Activated naive CD8-positive, alpha-beta T cell treated with anti-CD3 and anti-CD28 coated beads, Interleukin-2, amount 10 ng/mL, durations not matched to agents 7 days and 5 days (primary cell): ENCODE measurements at regions of chr5 and their contacts with region 1.

Region 1: DNA sequence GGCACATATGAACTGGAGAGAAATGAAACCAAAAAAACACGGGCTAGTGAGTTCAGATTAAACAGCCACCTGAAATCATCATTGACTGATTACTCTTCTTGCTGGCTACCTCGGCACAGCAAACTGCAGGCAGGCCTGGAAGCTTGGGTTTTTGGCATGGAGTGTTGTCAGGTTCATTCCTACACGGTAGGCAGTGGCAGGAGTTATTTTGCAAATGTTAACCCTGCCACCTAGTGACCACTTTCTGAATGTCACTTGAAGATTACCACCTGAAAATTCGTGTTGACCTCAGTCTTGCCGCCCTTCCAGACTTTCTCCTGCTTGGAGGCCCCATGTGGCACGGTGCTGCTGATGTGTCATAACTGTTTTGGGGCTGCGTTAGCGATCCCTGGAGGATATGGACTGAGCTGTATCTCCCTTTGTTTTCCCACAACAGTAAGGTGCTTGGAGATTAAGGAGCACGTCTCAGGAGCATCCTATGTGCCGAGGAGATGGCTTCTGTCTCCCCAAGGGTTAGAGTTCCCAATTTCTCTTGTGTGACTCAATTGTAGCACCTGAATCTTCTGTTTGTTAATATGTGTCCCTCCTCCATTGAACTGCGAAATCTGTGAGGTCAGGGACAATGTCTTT is 12.7 kb upstream of the CD180 start:
- DNase-seq: peak; percentile 64
- ATAC-seq: peak; percentile 35
- H3K4me3 Mint-ChIP-seq: peak overlapping the region; percentile 16
- H3K27ac Mint-ChIP-seq: peak overlapping the region; percentile 32
- H3K4me1 Mint-ChIP-seq: peaks cover 57% of the 10 kb centered on the region
- H3K27me3 Mint-ChIP-seq: no peaks in the 10 kb centered on the region

Region 2: DNA sequence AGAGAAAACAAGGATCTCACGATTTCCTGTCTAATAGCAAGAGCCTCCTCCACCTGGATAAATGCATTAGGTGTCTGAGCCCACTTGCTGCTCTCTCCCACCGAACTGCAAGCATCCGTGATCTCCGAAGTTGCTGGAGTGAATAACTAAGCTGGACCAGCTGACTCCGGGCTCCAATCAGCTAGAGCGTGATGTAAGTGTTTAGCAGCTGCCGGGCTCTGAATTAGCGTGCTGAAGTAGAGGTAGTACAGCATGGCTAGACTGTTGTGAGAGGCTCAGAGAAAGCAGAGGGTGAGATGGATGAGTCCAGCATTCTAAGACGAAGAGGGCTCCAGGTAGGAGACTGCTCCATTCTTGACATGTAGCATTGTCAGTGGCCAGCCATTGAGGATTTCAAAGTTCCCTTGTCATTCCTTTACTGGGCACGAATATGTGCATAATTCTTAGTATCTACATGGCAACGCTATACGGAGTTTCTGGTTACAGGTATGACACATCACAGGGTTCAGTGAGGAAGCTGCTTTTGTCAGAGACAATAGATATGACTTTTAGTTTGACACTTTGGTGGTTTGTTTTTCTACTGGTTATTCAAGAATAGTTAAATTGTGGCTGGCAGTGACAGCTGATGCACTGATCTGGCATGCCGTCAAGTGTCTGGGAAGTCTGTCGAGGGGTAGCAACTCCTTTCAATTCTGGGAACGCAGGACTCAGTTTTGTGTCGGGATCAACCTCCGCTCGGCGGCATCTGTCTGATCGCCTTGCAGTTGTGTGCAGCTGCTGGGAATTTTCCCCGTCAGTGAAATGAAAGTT is 380.5 kb before region 1 on chr5:
- POLR2A ChIA-PET with region 1: interaction called, 12 read pairs
- DNase-seq: peak; percentile 61
- ATAC-seq: peak; percentile 98
- H3K4me3 Mint-ChIP-seq: peak overlapping the region; percentile 81
- H3K27ac Mint-ChIP-seq: peak overlapping the region; percentile 89
- H3K4me1 Mint-ChIP-seq: peaks cover 33% of the 10 kb centered on the region
- H3K27me3 Mint-ChIP-seq: peaks cover 6% of the 10 kb centered on the region

Region 3: GRCh38 chr5:67156976-67157583 is 52.2 kb before region 1 on chr5:
- POLR2A ChIA-PET with region 1: interaction called, 341 read pairs
- DNase-seq: peak; percentile 51
- ATAC-seq: peak; percentile 55
- H3K4me3 Mint-ChIP-seq: no peak overlapping the region
- H3K27ac Mint-ChIP-seq: peak overlapping the region; percentile 1
- H3K4me1 Mint-ChIP-seq: peaks cover 42% of the 10 kb centered on the region
- H3K27me3 Mint-ChIP-seq: no peaks in the 10 kb centered on the region

Region 4: DNA sequence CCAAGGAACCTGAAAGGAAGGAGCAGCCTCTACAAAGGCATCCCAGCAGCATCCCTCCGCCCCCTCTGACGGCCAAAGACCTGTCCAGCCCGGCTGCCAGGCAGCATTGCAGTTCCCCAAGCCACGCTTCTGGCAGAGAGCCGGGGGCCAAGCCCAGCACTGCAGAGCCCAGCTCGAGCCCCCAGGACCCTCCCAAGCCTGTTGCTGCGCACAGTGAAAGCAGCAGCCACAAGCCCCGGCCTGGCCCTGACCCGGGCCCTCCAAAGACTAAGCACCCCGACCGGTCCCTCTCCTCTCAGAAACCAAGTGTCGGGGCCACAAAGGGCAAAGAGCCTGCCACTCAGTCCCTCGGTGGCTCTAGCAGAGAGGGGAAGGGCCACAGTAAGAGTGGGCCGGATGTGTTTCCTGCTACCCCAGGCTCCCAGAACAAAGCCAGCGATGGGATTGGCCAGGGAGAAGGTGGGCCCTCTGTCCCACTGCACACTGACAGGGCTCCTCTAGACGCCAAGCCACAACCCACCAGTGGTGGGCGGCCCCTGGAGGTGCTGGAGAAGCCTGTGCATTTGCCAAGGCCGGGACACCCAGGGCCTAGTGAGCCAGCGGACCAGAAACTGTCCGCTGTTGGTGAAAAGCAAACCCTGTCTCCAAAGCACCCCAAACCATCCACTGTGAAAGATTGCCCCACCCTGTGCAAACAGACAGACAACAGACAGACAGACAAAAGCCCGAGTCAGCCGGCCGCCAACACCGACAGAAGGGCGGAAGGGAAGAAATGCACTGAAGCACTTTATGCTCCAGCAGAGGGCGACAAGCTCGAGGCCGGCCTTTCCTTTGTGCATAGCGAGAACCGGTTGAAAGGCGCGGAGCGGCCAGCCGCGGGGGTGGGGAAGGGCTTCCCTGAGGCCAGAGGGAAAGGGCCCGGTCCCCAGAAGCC is 43.5 kb before region 1 on chr5:
- POLR2A ChIA-PET with region 1: interaction called, 341 read pairs
- DNase-seq: peak; percentile 88
- ATAC-seq: peak; percentile 89
- H3K4me3 Mint-ChIP-seq: peak overlapping the region; percentile 87
- H3K27ac Mint-ChIP-seq: peak overlapping the region; percentile 96
- H3K4me1 Mint-ChIP-seq: peaks cover 39% of the 10 kb centered on the region
- H3K27me3 Mint-ChIP-seq: no peaks in the 10 kb centered on the region

Region 5: GRCh38 chr5:67182301-67182790 is 26.9 kb before region 1 on chr5:
- POLR2A ChIA-PET with region 1: interaction called, 50 read pairs
- DNase-seq: peak; percentile 41
- ATAC-seq: peak; percentile 37
- H3K4me3 Mint-ChIP-seq: peak overlapping the region; percentile 52
- H3K27ac Mint-ChIP-seq: peak overlapping the region; percentile 80
- H3K4me1 Mint-ChIP-seq: peaks cover 57% of the 10 kb centered on the region
- H3K27me3 Mint-ChIP-seq: no peaks in the 10 kb centered on the region

Region 6: GRCh38 chr5:67221487-67222242 is 12.4 kb after region 1 on chr5:
- POLR2A ChIA-PET with region 1: interaction called, 30 read pairs
- DNase-seq: peak; percentile 58
- ATAC-seq: peak; percentile 86
- H3K4me3 Mint-ChIP-seq: peak overlapping the region; percentile 76
- H3K27ac Mint-ChIP-seq: peak overlapping the region; percentile 93
- H3K4me1 Mint-ChIP-seq: peaks cover 60% of the 10 kb centered on the region
- H3K27me3 Mint-ChIP-seq: no peaks in the 10 kb centered on the region

Region 7: GRCh38 chr5:67234671-67235176 is 25.5 kb after region 1 on chr5:
- POLR2A ChIA-PET with region 1: no interaction called
- DNase-seq: no peak
- ATAC-seq: no peak
- H3K4me3 Mint-ChIP-seq: no peak overlapping the region
- H3K27ac Mint-ChIP-seq: no peak overlapping the region
- H3K4me1 Mint-ChIP-seq: peaks cover 4% of the 10 kb centered on the region
- H3K27me3 Mint-ChIP-seq: no peaks in the 10 kb centered on the region